HCT116 (cell line): ENCODE measurements at regions of chr5 and their contacts with region 1.

Region 1: GRCh38 chr5:38551030-38552017 is 5.1 kb downstream of the LIFR start:
- DNase-seq: peak; percentile 23
- ATAC-seq: peak; percentile 67
- H3K4me3 ChIP-seq: no peak overlapping the region
- H3K27ac ChIP-seq: no peak overlapping the region
- H3K4me1 ChIP-seq: peaks cover 12 to 28% of the 10 kb centered on the region in 2 experiments; a peak in 3 of 4 replicates
- H3K27me3 ChIP-seq: no peaks in the 10 kb centered on the region
- CTCF ChIP-seq: peak; percentile 50 to 77 (median 68); a peak in 5 of 6 replicates
- POLR2A ChIP-seq: no peak
- RAD21 ChIP-seq: peak; percentile 61

Region 2: DNA sequence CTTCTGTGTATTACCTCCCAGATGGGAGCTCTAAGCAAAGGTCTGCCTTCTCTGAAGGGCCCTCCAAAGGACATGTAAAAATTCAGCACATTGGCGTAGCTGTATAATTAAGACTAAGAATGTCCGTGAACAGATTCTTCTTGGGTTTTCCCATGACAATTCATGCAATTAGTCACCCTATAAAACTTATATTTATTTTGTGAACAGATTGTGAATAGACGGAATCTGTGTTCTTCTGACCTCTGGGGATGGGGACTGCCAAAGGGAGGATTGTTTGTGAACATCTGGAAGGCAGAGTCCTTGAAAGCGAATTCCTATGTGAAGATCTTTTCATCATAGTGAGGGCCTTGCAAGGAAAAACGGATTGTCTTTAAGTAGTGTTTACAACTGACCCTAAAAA is 181.6 kb before region 1 on chr5:
- CTCF ChIA-PET with region 1: no interaction called
- POLR2A ChIA-PET with region 1: no interaction called
- RAD21 ChIA-PET with region 1: no interaction called
- intact Hi-C with region 1: no loop called
- DNase-seq: no peak
- ATAC-seq: no peak
- H3K4me3 ChIP-seq: no peak overlapping the region
- H3K27ac ChIP-seq: no peak overlapping the region
- H3K4me1 ChIP-seq: no peaks in the 10 kb centered on the region
- H3K27me3 ChIP-seq: 0 out of 2 replicates have a peak, but pooled peaks cover 4% of the 10 kb centered on the region
- CTCF ChIP-seq: no peak
- POLR2A ChIP-seq: no peak
- RAD21 ChIP-seq: no peak

Region 3: GRCh38 chr5:38666668-38667498 is 115.6 kb after region 1 on chr5:
- CTCF ChIA-PET with region 1: no interaction called
- POLR2A ChIA-PET with region 1: no interaction called
- RAD21 ChIA-PET with region 1: no interaction called
- intact Hi-C with region 1: loop called (anchors 5 kb)
- DNase-seq: peak; percentile 19
- ATAC-seq: peak; percentile 97
- H3K4me3 ChIP-seq: no peak overlapping the region
- H3K27ac ChIP-seq: no peak overlapping the region
- H3K4me1 ChIP-seq: no peaks in the 10 kb centered on the region
- H3K27me3 ChIP-seq: no peaks in the 10 kb centered on the region
- CTCF ChIP-seq: peak; percentile 67 to 80 (median 75); a peak in 5 of 6 replicates
- POLR2A ChIP-seq: no peak
- RAD21 ChIP-seq: peak; percentile 90

Region 4: GRCh38 chr5:38739007-38739743 is 187.9 kb after region 1 on chr5:
- CTCF ChIA-PET with region 1: no interaction called
- POLR2A ChIA-PET with region 1: no interaction called
- RAD21 ChIA-PET with region 1: no interaction called
- intact Hi-C with region 1: no loop called
- DNase-seq: no peak
- ATAC-seq: no peak
- H3K4me3 ChIP-seq: no peak overlapping the region
- H3K27ac ChIP-seq: no peak overlapping the region
- H3K4me1 ChIP-seq: peaks cover 0 to 4% of the 10 kb centered on the region in 2 experiments; a peak in 1 of 4 replicates
- H3K27me3 ChIP-seq: no peaks in the 10 kb centered on the region
- CTCF ChIP-seq: no peak
- POLR2A ChIP-seq: no peak
- RAD21 ChIP-seq: no peak